PC-3 (cell line): ENCODE measurements at regions of chr3 and their contacts with region 1.

Region 1: DNA sequence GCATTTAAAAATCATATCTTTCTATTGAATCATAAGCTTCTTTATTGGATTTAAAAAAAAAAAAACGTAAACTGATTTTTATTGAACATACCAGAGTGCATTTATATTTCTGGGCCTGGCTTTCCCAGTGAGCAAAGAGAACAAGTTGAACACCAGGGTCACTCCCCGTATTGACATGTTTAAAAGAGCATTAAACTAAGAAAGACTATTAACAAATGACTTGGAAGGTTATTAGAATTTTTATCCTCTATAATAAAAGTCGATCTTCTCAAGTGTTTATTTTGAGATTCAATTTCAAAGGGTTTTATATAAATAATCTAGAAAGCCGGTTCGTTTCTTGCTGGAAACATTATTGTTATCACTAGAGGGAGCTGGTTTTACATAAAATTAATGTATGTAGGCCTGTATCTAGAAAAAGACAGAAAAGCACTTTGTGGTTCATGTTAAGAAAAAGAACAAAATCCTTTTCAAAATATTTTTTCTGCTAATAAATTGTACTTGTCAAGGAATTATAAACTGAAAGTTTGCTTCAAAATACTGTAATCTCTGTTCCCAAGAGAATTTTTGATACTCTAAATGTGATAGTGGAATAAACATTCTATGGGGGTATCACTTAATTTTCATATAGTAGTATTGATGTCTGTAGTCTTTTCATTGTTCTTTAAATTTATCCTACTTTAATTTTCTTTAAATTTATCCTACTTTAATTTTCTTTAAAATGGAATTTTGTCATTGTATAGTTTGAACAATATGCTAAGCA is 321.8 kb upstream of the MME start:
- DNase-seq: peak; percentile 65
- ATAC-seq: peak; percentile 68
- H3K4me3 ChIP-seq: peak overlapping the region; percentile 29; the same call in 1 of the 2 replicates
- H3K27ac ChIP-seq: no peak overlapping the region
- H3K4me1 ChIP-seq: no peaks in the 10 kb centered on the region
- H3K27me3 ChIP-seq: no peaks in the 10 kb centered on the region
- CTCF ChIP-seq: peak; percentile 78

Region 2: DNA sequence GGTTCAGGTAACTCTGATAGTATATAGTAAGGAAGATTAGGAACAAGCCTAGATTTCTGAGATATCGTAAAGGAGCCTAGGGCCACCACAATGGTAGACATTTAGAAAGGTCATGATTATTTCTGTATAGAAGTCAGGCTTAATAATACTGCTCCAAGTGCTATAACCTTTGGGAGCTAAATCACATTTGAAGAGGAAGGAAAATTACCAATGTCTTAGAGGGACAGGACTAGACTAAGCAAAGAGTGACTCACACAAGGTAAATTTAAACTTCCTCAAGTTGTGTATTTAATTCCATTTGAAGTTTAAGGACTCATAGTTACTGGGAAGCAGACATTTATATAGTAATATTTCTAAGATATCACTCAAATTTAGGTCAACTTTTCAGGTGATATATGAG is 94.2 kb after region 1 on chr3:
- CTCF ChIA-PET with region 1: no interaction called
- POLR2A ChIA-PET with region 1: no interaction called
- intact Hi-C with region 1: loop called (anchors 2 kb)
- DNase-seq: peak; percentile 57
- ATAC-seq: peak; percentile 86
- H3K4me3 ChIP-seq: no peak overlapping the region
- H3K27ac ChIP-seq: peak overlapping the region; percentile 7
- H3K4me1 ChIP-seq: peaks cover 12% of the 10 kb centered on the region
- H3K27me3 ChIP-seq: no peaks in the 10 kb centered on the region
- CTCF ChIP-seq: no peak

Region 3: DNA sequence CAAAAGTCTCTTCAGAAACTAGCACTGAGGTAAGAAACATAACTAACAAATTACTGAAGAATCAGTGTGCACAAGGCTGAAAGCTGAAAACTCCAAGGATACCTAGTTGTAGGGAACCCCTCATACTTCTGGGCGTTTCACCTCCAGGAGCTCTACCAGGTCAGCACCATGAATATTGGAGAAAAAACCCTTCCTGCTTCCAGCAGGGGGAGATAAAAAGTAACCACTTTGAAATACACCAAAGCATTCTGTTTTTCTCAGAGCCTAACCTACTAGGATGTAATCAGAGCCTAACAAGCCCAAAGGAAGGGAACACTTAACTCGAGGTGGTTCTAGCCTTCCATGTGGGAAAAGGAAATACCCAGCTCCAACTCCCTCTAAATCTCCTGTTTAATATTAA is 146.0 kb after region 1 on chr3:
- CTCF ChIA-PET with region 1: interaction called, 3 read pairs
- POLR2A ChIA-PET with region 1: no interaction called
- intact Hi-C with region 1: loop called (anchors 1 kb)
- DNase-seq: peak; percentile 53
- ATAC-seq: peak; percentile 72
- H3K4me3 ChIP-seq: no peak overlapping the region
- H3K27ac ChIP-seq: no peak overlapping the region
- H3K4me1 ChIP-seq: no peaks in the 10 kb centered on the region
- H3K27me3 ChIP-seq: no peaks in the 10 kb centered on the region
- CTCF ChIP-seq: peak; percentile 69

Region 4: GRCh38 chr3:154954753-154955152 is 196.5 kb after region 1 on chr3:
- CTCF ChIA-PET with region 1: no interaction called
- POLR2A ChIA-PET with region 1: no interaction called
- intact Hi-C with region 1: loop called (anchors 5 kb)
- DNase-seq: peak; percentile 46
- ATAC-seq: peak; percentile 49
- H3K4me3 ChIP-seq: no peak overlapping the region
- H3K27ac ChIP-seq: no peak overlapping the region
- H3K4me1 ChIP-seq: no peaks in the 10 kb centered on the region
- H3K27me3 ChIP-seq: no peaks in the 10 kb centered on the region
- CTCF ChIP-seq: peak; percentile 60

Region 5: DNA sequence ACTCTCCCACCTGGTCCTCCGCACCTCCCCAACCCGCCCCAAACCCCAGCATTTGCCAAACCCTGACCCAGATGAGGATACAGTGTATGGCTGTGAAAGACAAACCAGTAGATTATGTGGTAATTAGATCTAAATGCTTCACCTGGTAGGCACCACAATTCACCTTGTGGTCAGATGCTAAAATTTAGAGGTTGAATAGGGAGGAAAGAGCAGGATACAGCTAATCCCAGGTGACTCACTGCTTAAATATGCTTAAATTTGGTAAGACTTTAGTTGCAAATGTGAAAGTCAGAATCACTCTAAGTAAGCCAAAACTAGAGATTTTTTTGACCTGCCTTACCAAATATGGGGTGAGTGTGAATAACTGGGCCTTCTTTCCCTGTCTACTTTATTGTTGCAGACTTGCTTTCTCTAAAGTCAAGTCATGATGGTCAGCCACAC is 427.4 kb after region 1 on chr3:
- CTCF ChIA-PET with region 1: no interaction called
- POLR2A ChIA-PET with region 1: no interaction called
- intact Hi-C with region 1: loop called (anchors 10 kb)
- DNase-seq: peak; percentile 27
- ATAC-seq: peak; percentile 35; the same call in 1 of the 2 replicates
- H3K4me3 ChIP-seq: no peak overlapping the region
- H3K27ac ChIP-seq: no peak overlapping the region
- H3K4me1 ChIP-seq: peaks cover 6% of the 10 kb centered on the region; the same call in 1 of the 2 replicates
- H3K27me3 ChIP-seq: no peaks in the 10 kb centered on the region
- CTCF ChIP-seq: no peak